GM12878 (cell line): ENCODE measurements at regions of chr11 and their contacts with region 1.

Region 1: GRCh38 chr11:128412847-128413791 is 174.2 kb downstream of the ETS1 start:
- DNase-seq: peak; percentile 82
- ATAC-seq: peak; percentile 76
- H3K4me3 ChIP-seq: peak overlapping the region; percentile 47; the same call in 1 of the 2 replicates
- H3K27ac ChIP-seq: peak overlapping the region; percentile 75
- H3K4me1 ChIP-seq: peaks cover 6% of the 10 kb centered on the region
- H3K27me3 ChIP-seq: no peaks in the 10 kb centered on the region
- CTCF ChIP-seq: no peak
- EP300 ChIP-seq: peak; percentile 45 to 76; a peak in 2 of 4 replicates
- POLR2A ChIP-seq: no peak
- RAD21 ChIP-seq: no peak

Region 2: DNA sequence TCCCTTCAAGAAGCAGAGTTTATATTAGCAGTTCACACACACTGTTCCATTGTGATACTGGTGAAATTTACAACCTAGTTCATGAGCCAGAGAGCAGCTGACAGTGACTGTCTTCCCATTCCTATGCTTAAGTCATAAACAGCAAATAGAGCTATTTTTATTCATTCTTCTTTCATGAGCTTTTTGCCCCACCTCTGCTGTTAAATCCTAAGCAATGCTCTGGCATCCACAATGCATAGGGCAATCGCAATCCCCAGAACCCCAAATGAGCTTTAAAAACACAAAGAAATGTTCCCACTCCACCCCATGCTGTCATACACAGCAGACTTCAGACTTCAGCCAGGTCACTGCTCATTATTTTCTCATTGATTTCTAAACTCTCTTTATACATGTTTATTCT is 133.3 kb before region 1 on chr11:
- CTCF ChIA-PET with region 1: no interaction called
- POLR2A ChIA-PET with region 1: no interaction called
- RAD21 ChIA-PET with region 1: no interaction called
- SMC1A ChIA-PET with region 1: no interaction called
- in situ Hi-C with region 1: no loop called
- intact Hi-C with region 1: no loop called
- DNase-seq: no peak
- ATAC-seq: no peak
- H3K4me3 ChIP-seq: no peak overlapping the region
- H3K27ac ChIP-seq: no peak overlapping the region
- H3K4me1 ChIP-seq: no peaks in the 10 kb centered on the region
- H3K27me3 ChIP-seq: peaks cover 4% of the 10 kb centered on the region in 2 experiments; a peak in 3 of 4 replicates
- CTCF ChIP-seq: no peak
- EP300 ChIP-seq: no peak
- POLR2A ChIP-seq: no peak
- RAD21 ChIP-seq: no peak

Region 3: DNA sequence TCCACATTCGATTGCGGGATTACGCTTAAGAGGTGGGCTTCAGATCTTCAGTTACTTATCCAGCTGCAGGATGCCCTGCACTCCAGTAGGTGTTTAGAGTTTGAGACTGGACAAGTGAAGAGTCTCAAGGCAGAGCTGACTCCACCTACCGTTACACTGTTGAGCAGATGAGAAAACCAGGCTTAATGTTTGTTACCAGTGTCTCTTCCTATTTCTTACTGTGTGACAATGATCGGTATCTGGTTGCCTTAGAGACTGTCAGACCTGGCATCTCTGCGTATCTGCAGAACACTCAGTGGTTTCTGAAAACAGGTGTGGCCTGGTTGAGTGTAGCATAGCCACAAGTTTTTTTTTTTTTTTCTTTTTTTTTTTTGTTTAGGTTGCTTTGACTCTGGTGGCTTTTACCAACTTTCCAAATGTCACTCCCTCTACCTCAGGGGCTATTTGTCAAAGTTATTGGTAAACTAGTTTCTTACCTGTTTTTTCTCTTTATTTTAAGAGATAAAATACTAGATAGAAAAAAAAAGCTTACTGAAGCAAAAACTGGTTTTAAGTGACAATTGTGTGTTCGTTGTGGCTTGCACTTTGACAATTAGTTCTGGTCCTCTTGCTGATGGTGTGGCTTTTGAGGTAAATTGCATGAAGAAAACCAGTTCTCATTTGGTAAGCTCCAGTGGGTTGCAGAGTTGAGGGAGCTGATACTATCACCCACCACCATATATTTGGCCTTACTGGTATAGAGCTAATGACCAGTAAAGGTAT is 110.5 kb before region 1 on chr11:
- CTCF ChIA-PET with region 1: interaction called, 5 read pairs
- POLR2A ChIA-PET with region 1: no interaction called
- RAD21 ChIA-PET with region 1: interaction called, 11 read pairs
- SMC1A ChIA-PET with region 1: interaction called, 6 read pairs
- in situ Hi-C with region 1: no loop called
- intact Hi-C with region 1: no loop called
- DNase-seq: peak; percentile 82
- ATAC-seq: peak; percentile 89
- H3K4me3 ChIP-seq: no peak overlapping the region
- H3K27ac ChIP-seq: peak overlapping the region; percentile 35; the same call in 1 of the 2 replicates
- H3K4me1 ChIP-seq: peaks cover 62% of the 10 kb centered on the region
- H3K27me3 ChIP-seq: no peaks in the 10 kb centered on the region
- CTCF ChIP-seq: 0 out of 6 replicates have a peak, but pooled peaks of 1 of the 3 experiments have one; percentile 11
- EP300 ChIP-seq: peak; percentile 6 to 8; a peak in 1 of 4 replicates
- POLR2A ChIP-seq: no peak
- RAD21 ChIP-seq: no peak

Region 4: GRCh38 chr11:128323381-128323780 is 89.7 kb before region 1 on chr11:
- CTCF ChIA-PET with region 1: interaction called, 4 read pairs
- POLR2A ChIA-PET with region 1: no interaction called
- RAD21 ChIA-PET with region 1: interaction called, 8 read pairs
- SMC1A ChIA-PET with region 1: interaction called, 9 read pairs
- in situ Hi-C with region 1: no loop called
- intact Hi-C with region 1: loop called (anchors 1 kb)
- DNase-seq: no peak
- ATAC-seq: peak; percentile 43
- H3K4me3 ChIP-seq: no peak overlapping the region
- H3K27ac ChIP-seq: no peak overlapping the region
- H3K4me1 ChIP-seq: peaks cover 11% of the 10 kb centered on the region
- H3K27me3 ChIP-seq: no peaks in the 10 kb centered on the region
- CTCF ChIP-seq: peak; percentile 41 to 46 (median 45); a peak in 5 of 6 replicates
- EP300 ChIP-seq: no peak
- POLR2A ChIP-seq: no peak
- RAD21 ChIP-seq: peak; percentile 74

Region 5: DNA sequence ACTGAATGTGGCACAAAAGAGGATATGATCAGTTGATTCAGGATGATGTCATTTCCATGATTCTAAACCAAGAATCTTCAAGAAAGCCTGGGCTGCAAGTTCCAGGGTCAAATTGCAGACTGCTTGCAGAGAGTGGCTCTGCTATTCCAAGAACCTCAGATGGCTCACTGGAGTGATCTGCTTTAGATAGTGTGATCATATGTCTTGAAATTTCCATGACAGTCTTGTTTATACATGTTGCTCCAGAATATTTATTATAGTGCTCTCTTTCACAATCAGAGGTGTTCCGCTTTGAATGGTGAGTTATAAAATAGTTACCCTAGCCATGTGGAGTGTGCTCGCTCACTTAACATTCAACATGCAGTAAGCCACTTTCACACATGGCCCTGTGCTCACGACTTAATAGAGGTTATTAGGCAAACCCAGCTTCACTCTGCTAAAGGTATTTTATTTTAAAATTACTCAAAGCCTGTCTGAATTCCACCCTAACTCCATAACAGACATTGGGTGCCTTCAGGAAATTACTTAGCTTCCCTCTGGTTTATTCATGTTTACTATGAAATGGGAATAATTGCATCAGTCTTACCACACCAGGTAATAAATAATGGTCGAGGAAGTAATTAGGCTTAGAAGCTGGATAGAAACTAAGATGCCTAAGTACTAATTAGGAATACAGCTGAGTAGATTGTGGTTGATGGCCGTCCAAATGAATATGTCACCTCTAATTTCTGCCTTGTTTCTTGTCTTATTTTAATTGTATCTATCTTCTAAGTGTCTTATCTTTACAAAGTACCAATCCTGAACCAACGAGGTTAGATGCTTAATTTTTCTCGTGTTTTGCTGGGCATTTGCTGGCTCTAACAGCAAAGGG is 13.6 kb before region 1 on chr11:
- CTCF ChIA-PET with region 1: no interaction called
- POLR2A ChIA-PET with region 1: interaction called, 5 read pairs
- RAD21 ChIA-PET with region 1: interaction called, 9 read pairs
- SMC1A ChIA-PET with region 1: interaction called, 59 read pairs
- in situ Hi-C with region 1: no loop called
- intact Hi-C with region 1: no loop called
- DNase-seq: peak; percentile 26
- ATAC-seq: peak; percentile 93
- H3K4me3 ChIP-seq: no peak overlapping the region
- H3K27ac ChIP-seq: no peak overlapping the region; the same call in 1 of the 2 replicates
- H3K4me1 ChIP-seq: peaks cover 8% of the 10 kb centered on the region
- H3K27me3 ChIP-seq: no peaks in the 10 kb centered on the region
- CTCF ChIP-seq: no peak
- EP300 ChIP-seq: 0 out of 4 replicates have a peak, but pooled peaks of 1 of the 2 experiments have one; percentile 31
- POLR2A ChIP-seq: no peak
- RAD21 ChIP-seq: no peak

Region 6: DNA sequence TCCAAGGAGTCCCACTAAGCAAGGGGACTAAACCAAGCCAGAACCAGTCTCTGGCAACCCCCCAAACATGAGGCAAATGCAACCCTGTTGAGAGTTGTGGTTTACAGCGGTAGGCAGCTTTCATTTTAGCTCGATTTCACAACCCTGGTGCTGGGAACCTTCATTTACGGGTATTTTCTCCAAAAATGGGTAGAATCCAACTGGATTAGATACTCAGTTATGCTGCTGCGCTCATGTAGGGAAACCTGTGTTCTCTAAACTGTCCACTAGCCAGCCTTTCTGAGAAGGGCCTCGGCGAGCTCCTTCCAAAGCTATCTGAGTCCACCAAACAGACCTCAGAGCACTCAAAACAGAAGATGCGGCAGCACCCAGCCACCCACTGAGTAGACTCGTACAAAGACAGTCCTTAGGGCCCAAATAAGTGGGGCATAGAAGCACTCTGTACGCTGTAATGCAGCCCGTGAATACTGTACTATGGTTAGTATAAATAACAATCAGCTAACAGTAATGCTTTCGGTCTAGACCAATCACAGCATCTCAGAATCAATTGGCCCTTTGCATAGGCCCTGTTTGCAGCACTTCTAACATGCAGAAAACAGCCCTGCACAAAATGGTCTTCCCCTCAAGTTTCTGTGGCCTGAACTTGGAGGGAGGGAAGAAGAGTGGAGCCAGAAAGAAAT is 69.5 kb after region 1 on chr11:
- CTCF ChIA-PET with region 1: interaction called, 3 read pairs
- POLR2A ChIA-PET with region 1: interaction called, 3 read pairs
- RAD21 ChIA-PET with region 1: interaction called, 11 read pairs
- SMC1A ChIA-PET with region 1: interaction called, 6 read pairs
- in situ Hi-C with region 1: no loop called
- intact Hi-C with region 1: no loop called
- DNase-seq: no peak
- ATAC-seq: peak; percentile 81
- H3K4me3 ChIP-seq: peak overlapping the region; percentile 37
- H3K27ac ChIP-seq: peak overlapping the region; percentile 97
- H3K4me1 ChIP-seq: peaks cover 42% of the 10 kb centered on the region
- H3K27me3 ChIP-seq: no peaks in the 10 kb centered on the region
- CTCF ChIP-seq: no peak
- EP300 ChIP-seq: peak in 1 of 2 experiments; percentile 44; a peak in 1 of 4 replicates
- POLR2A ChIP-seq: peak; percentile 64
- RAD21 ChIP-seq: 0 out of 2 replicates have a peak, but pooled peaks have one; percentile 1